Dendritic cell treated with granulocyte-macrophage colony-stimulating factor and Interleukin-4, amounts not matched to agents 40 ng/mL and 50 ng/mL, for 4 days (primary cell): ENCODE measurements at regions of chr7 and their contacts with region 1.

Region 1: DNA sequence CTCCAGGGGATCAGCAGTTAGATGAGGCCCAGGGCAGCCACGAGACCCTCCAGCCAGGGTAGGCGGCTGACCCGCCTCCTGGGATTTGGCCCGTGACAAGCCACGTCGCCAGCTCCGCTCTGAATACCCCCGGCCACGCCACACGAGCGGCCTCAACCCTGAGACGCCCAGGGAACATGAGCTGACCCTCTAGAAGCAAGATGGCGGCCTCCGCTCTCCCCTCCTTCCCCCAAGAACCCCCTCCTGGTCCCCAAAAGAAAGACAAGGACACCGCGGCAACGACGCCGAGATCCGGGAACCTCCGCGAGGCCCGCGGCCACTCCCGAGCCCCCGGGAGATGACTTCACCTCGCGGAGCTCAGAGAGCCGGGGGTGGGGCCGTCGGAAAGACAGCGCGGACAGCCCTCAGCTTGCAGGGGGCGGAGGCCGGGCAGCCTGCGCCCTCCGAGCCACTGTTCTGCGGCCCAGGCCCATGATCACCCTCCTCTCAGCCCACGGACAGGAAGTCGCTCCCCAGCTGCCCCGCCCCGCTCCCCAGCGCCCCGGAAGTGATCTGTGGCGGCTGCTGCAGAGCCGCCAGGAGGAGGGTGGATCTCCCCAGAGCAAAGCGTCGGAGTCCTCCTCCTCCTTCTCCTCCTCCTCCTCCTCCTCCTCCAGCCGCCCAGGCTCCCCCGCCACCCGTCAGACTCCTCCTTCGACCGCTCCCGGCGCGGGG is at the start of gene RALA:
- H3K4me3 Mint-ChIP-seq: peak within 1 kb of the TSS; percentile 82
- H3K27ac Mint-ChIP-seq: peak within 1 kb of the TSS; percentile 94
- H3K4me1 Mint-ChIP-seq: peaks cover 41% of the 10 kb centered on the region
- H3K27me3 Mint-ChIP-seq: no peaks in the 10 kb centered on the region

Region 2: DNA sequence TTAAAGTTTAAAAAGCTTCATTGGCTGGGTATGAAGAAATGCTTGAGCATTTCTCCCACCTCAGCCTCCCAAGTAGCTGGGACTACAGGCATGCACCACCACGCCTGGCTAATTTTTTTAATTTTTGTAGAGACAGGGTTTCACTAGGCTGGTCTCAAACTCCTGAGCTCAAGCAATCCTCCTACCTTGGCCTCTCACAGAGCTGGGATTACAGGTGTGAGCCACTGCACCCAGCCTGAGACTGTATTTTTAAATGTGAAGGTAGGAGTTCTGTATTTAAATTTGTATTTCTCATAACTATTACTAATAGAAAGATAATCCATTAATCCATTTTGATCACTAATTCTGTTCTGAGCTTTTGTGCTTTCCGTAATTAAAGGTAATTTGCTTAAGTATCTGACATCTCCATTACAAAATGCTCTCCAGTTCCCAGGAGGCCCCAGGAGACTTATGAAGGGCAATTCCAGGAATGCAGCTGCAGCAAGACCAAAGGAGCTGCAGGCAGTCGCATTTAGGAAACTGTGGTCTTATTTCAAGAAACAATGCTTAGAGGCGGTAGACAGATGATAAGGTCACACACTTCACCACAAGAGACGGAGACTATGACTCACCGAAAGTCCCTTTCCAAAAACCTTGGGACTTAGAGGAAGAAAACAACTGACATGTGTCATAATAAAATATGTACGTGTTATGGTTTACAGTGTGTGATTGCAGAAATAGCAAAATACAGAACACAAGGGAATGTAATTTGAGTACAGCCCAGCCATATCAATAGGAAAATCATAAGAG is 33.7 kb before region 1 on chr7:
- intact Hi-C with region 1: loop called (anchors 2 kb)
- H3K4me3 Mint-ChIP-seq: no peak overlapping the region
- H3K27ac Mint-ChIP-seq: peak overlapping the region; percentile 45
- H3K4me1 Mint-ChIP-seq: peaks cover 18% of the 10 kb centered on the region
- H3K27me3 Mint-ChIP-seq: no peaks in the 10 kb centered on the region

Region 3: GRCh38 chr7:39691821-39692220 is 68.6 kb after region 1 on chr7:
- intact Hi-C with region 1: loop called (anchors 10 kb)
- H3K4me3 Mint-ChIP-seq: no peak overlapping the region
- H3K27ac Mint-ChIP-seq: no peak overlapping the region
- H3K4me1 Mint-ChIP-seq: peaks cover 6% of the 10 kb centered on the region
- H3K27me3 Mint-ChIP-seq: no peaks in the 10 kb centered on the region

Region 4: GRCh38 chr7:39732837-39733804 is 109.9 kb after region 1 on chr7:
- intact Hi-C with region 1: loop called (anchors 2 kb)
- H3K4me3 Mint-ChIP-seq: peak overlapping the region; percentile 84
- H3K27ac Mint-ChIP-seq: peak overlapping the region; percentile 99
- H3K4me1 Mint-ChIP-seq: peaks cover 54% of the 10 kb centered on the region
- H3K27me3 Mint-ChIP-seq: no peaks in the 10 kb centered on the region

Region 5: GRCh38 chr7:39811161-39811614 is 188.0 kb after region 1 on chr7:
- intact Hi-C with region 1: no loop called
- H3K4me3 Mint-ChIP-seq: no peak overlapping the region
- H3K27ac Mint-ChIP-seq: no peak overlapping the region
- H3K4me1 Mint-ChIP-seq: no peaks in the 10 kb centered on the region
- H3K27me3 Mint-ChIP-seq: no peaks in the 10 kb centered on the region

Region 6: DNA sequence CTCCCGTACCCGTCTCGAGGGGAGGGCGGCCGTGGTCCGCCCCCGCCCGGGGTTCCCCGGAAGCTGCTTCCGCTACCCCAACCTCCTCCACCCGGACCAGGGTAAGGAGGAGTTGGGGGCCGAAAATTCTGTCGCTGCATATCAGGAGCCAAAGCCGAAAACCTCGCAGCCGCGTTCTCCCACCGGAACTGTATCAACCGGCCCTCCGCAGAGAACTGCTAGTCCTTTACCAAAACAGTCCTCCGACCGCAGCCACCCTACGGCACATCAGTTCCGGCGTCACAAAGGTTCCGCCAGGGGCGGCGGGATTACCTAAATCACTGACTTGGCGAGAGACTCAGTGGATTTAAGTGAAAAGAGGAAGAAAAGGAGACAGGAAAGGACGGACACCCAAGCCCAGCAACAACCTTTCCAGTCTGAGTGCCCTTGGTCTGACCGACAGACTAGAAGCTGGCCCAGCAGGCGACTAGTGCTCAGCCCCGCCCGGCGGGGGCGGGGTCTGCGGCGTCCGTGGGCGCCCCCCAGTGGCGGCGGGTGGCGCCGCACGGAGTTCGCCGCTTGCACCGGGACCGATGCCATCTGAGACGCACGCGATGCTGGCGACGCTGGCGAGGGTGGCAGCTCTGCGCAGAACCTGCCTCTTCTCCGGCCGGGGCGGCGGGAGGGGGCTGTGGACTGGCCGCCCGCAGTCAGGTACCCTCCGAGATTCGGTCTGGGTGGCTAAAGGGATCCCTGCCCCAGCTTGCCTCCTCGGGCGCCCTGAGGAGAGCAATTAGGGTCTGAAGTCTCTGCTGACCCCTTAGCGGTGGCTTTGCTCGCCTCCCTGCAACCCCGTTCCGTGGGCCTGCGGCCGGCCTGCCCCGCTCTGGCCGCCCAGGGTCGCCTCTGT is 511.5 kb after region 1 on chr7 and contains the starts of genes MPLKIP and SUGCT:
- intact Hi-C with region 1: loop called (anchors 10 kb)
- H3K4me3 Mint-ChIP-seq: peak within 1 kb of the TSS; percentile 86
- H3K27ac Mint-ChIP-seq: peak within 1 kb of the TSS; percentile 96
- H3K4me1 Mint-ChIP-seq: peaks cover 20% of the 10 kb centered on the region
- H3K27me3 Mint-ChIP-seq: peaks cover 27% of the 10 kb centered on the region